CD4-positive, alpha-beta T cell (primary cell): ENCODE measurements at regions of chr2 and their contacts with region 1.

Region 1: GRCh38 chr2:138296365-138296764 is 205.2 kb upstream of the SPOPL start:
- DNase-seq: no peak
- ATAC-seq: no peak
- H3K4me3 ChIP-seq: no peak overlapping the region
- H3K4me3 Mint-ChIP-seq: no peak overlapping the region
- H3K27ac ChIP-seq: no peak overlapping the region
- H3K27ac Mint-ChIP-seq: no peak overlapping the region
- H3K4me1 ChIP-seq: no peaks in the 10 kb centered on the region
- H3K4me1 Mint-ChIP-seq: no peaks in the 10 kb centered on the region
- H3K27me3 ChIP-seq: no peaks in the 10 kb centered on the region
- H3K27me3 Mint-ChIP-seq: no peaks in the 10 kb centered on the region
- CTCF ChIP-seq: no peak

Region 2: DNA sequence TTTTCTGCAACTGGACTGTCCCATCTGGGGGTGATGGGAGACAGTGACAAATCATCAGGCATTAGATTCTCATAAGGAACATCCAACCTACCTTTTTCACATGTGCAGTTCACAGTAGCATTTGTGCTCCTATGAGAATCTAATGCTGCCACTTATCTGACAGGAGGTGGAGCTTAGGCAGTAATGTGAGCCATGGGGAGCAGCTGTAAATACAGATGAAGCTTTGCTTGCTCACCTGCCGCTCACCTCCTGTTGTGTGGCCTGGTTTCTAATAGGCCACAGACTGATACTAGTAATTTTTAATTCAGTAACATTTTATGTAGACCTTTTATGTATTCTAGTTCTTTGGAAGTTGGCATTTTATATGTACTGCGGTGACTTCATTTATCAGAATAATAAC is 25.1 kb after region 1 on chr2:
- CTCF ChIA-PET with region 1: no interaction called
- POLR2A ChIA-PET with region 1: no interaction called
- intact Hi-C with region 1: loop called in 1 of 2 experiments (anchors 2 kb)
- DNase-seq: no peak
- ATAC-seq: no peak
- H3K4me3 ChIP-seq: no peak overlapping the region
- H3K4me3 Mint-ChIP-seq: no peak overlapping the region
- H3K27ac ChIP-seq: no peak overlapping the region
- H3K27ac Mint-ChIP-seq: no peak overlapping the region
- H3K4me1 ChIP-seq: no peaks in the 10 kb centered on the region
- H3K4me1 Mint-ChIP-seq: no peaks in the 10 kb centered on the region
- H3K27me3 ChIP-seq: no peaks in the 10 kb centered on the region
- H3K27me3 Mint-ChIP-seq: no peaks in the 10 kb centered on the region
- CTCF ChIP-seq: no peak

Region 3: DNA sequence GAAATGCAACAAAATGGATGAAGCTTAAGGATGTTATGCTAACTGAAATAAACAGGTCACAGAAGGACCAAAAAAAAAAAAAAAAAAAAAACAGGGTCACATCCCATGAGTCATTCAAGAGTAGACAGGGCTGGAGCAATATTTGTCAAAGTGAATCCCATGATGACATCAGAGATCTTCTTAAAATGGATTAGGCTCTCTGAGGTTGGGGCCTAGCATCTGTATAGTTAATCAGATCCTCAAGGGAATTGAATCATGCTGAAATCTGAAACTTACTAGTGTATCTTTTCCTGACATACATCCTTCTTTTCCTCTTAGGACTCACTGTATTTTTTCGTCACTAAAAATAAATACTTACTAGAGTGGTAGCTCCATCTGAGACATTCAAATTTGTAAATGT is 864.5 kb after region 1 on chr2:
- CTCF ChIA-PET with region 1: no interaction called
- POLR2A ChIA-PET with region 1: no interaction called
- intact Hi-C with region 1: no loop called
- DNase-seq: no peak
- ATAC-seq: no peak
- H3K4me3 ChIP-seq: no peak overlapping the region
- H3K4me3 Mint-ChIP-seq: no peak overlapping the region
- H3K27ac ChIP-seq: no peak overlapping the region
- H3K27ac Mint-ChIP-seq: no peak overlapping the region
- H3K4me1 ChIP-seq: no peaks in the 10 kb centered on the region
- H3K4me1 Mint-ChIP-seq: no peaks in the 10 kb centered on the region
- H3K27me3 ChIP-seq: no peaks in the 10 kb centered on the region
- H3K27me3 Mint-ChIP-seq: no peaks in the 10 kb centered on the region
- CTCF ChIP-seq: no peak